T-cell (primary cell): ENCODE measurements at regions of chr3 and their contacts with region 1.

Region 1: GRCh38 chr3:186381424-186382216 is 19.6 kb upstream of the DGKG start:
- DNase-seq: no peak
- ATAC-seq: no peak
- H3K4me3 ChIP-seq: no peak overlapping the region
- H3K4me3 Mint-ChIP-seq: no peak overlapping the region
- H3K27ac ChIP-seq: no peak overlapping the region
- H3K27ac Mint-ChIP-seq: no peak overlapping the region
- H3K4me1 ChIP-seq: peaks cover 0 to 4% of the 10 kb centered on the region in 2 experiments
- H3K4me1 Mint-ChIP-seq: no peaks in the 10 kb centered on the region
- H3K27me3 ChIP-seq: peaks cover 0 to 14% of the 10 kb centered on the region in 2 experiments
- H3K27me3 Mint-ChIP-seq: peaks cover 12% of the 10 kb centered on the region in 2 donors

Region 2: GRCh38 chr3:185446383-185446782 is 935.2 kb before region 1 on chr3:
- CTCF ChIA-PET with region 1: no interaction called
- POLR2A ChIA-PET with region 1: interaction called in 1 of 2 experiments, 15 read pairs
- DNase-seq: no peak
- ATAC-seq: no peak
- H3K4me3 ChIP-seq: no peak overlapping the region
- H3K4me3 Mint-ChIP-seq: no peak overlapping the region
- H3K27ac ChIP-seq: no peak overlapping the region
- H3K27ac Mint-ChIP-seq: no peak overlapping the region
- H3K4me1 ChIP-seq: no peaks in the 10 kb centered on the region
- H3K4me1 Mint-ChIP-seq: no peaks in the 10 kb centered on the region
- H3K27me3 ChIP-seq: no peaks in the 10 kb centered on the region
- H3K27me3 Mint-ChIP-seq: peaks cover 0 to 1% of the 10 kb centered on the region in 2 donors